ENCODE measurements at regions of chr11 and their contacts with region 1.

Region 1: DNA sequence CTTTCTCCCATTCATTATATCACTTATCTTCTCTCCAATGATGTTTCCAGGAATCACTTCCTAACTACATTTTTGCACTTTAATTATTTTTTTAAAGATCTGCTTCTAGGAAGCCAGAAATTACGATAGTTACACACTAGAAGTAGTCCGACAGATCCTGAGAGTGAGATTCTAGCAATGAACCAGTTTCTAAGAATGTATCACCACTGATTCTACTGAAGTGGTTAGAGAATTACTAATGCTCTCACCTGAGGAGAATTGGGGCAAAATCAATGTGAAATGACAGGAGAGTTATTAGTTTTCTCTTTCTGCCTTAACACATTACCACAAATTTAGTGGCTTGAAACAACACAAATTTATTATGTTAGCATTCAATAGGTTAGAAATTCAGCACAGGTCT is 241.2 kb downstream of the CASP12 start:
- DNase-seq: no peak
- H3K4me3 Mint-ChIP-seq: no peak overlapping the region
- H3K27ac Mint-ChIP-seq: no peak overlapping the region
- H3K4me1 Mint-ChIP-seq: peaks cover 20% of the 10 kb centered on the region
- H3K27me3 Mint-ChIP-seq: peaks cover 2% of the 10 kb centered on the region

Region 2: DNA sequence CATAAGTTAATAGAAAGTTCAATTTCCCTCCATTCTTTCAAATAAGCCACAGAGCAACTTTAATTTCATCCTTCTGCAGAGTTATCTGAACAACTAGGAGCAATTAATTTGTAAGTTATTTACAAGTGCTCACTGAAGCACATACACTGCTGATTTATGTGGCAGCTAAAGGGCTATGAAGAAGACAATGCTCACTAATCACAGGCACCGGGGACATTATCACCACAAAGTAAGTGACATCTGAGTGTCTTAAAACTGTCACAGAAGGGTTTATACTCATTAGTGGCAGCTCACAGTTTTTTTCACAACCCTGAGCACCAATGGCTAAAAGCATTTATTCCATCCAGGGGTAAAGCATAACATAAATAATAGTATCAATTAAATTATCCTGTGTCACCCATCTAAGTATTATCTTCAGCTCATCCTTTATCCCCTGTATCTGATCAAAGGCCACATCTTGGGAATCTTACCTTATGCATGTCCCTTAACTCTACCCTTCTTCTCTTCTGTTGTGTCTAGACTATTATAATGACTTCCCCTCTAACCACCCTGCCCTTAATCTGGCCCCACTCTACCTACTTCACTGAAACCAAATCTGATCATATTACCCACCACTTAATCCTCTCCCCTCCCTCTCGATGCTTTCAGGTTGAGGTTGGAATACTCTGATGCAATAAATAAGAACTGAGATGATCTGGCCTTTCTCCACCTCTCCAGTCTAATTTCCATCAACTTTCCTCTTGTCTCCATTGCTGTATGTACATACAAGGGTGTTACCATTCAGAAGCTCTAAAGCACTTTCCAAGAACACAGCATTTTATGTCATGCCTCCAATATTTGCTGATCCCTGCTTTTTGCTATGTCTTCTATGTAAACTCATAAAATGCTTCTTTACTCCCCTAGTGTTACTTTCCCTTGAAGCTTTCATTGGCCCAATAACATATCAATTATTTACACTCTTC is 11.5 kb before region 1 on chr11:
- CTCF ChIA-PET with region 1: no interaction called
- intact Hi-C with region 1: no loop called
- DNase-seq: no peak
- H3K4me3 Mint-ChIP-seq: no peak overlapping the region
- H3K27ac Mint-ChIP-seq: no peak overlapping the region
- H3K4me1 Mint-ChIP-seq: peaks cover 12% of the 10 kb centered on the region
- H3K27me3 Mint-ChIP-seq: no peaks in the 10 kb centered on the region

Region 3: GRCh38 chr11:104668797-104669463 is 11.8 kb after region 1 on chr11:
- CTCF ChIA-PET with region 1: no interaction called
- intact Hi-C with region 1: loop called (anchors 1 kb)
- DNase-seq: no peak
- H3K4me3 Mint-ChIP-seq: no peak overlapping the region
- H3K27ac Mint-ChIP-seq: no peak overlapping the region
- H3K4me1 Mint-ChIP-seq: peaks cover 13% of the 10 kb centered on the region
- H3K27me3 Mint-ChIP-seq: no peaks in the 10 kb centered on the region

Region 4: GRCh38 chr11:104897891-104898684 is 241.0 kb after region 1 on chr11 and contains the start of gene CASP12:
- CTCF ChIA-PET with region 1: no interaction called
- intact Hi-C with region 1: loop called (anchors 5 kb)
- DNase-seq: peak; percentile 32
- H3K4me3 Mint-ChIP-seq: peak within 1 kb of the TSS; percentile 64
- H3K27ac Mint-ChIP-seq: peak within 1 kb of the TSS; percentile 76
- H3K4me1 Mint-ChIP-seq: peaks cover 26% of the 10 kb centered on the region
- H3K27me3 Mint-ChIP-seq: no peaks in the 10 kb centered on the region
- total RNA-seq, gene CASP12: not detected